ENCODE measurements at regions of chr5 and their contacts with region 1.

Region 1: DNA sequence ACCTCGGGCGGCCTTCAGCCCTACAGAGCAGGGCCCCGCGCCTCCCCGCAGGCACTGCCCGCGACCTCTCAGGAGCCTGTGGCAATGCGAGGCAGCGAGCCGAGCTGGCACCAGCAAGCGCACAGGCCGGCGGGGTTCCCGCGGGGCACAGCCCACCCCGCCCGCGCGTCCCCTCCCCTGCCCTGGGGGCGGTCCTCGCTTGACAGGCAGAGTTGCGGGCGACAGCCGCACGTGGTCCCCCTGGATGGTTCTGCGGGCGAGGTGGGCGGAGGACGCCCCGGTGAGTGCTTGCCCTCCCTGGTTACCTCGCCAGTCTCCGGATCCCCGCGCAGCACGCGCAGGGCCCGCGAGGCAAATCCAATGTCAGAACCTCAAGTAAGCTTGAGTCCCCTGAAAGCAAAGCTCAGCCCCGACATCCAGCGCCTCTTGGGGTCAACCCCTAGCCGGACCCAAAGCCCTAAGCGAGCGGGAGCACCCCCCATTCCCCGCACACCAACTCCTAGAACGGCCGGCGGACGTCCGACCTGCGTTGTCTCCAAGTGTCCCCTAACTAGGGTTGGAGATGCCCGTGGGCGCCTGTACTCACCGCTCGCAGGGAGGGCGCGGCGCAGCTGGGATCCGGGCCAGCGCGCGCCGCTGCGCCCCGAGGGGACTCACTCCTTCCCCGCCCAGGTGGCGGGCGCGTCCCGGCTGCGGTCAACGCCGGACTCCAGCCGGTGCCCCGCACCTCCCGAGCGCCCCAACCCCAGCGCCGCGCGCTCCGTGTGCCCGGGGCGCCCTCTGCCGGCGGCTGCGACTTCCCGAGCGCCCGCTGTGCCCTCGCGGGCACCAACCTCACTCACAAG is at the start of gene DRD1:
- DNase-seq: peak in 7 of 9 donors; percentile 37 to 74 (median 42)
- ATAC-seq: peak; percentile 78
- H3K4me3 ChIP-seq: peak within 1 kb of the TSS; percentile 30
- H3K4me3 Mint-ChIP-seq: peak within 1 kb of the TSS; percentile 42 to 86 (median 77)
- H3K27ac ChIP-seq: no peak within 1 kb of the TSS
- H3K27ac Mint-ChIP-seq: no peak within 1 kb of the TSS
- H3K4me1 ChIP-seq: peaks cover 0 to 5% of the 10 kb centered on the region in 2 donors
- H3K4me1 Mint-ChIP-seq: peaks cover 0 to 14% (median 7%) of the 10 kb centered on the region in 7 donors
- H3K27me3 ChIP-seq: peaks cover 3 to 12% of the 10 kb centered on the region in 2 donors
- H3K27me3 Mint-ChIP-seq: peaks cover 49 to 82% (median 51%) of the 10 kb centered on the region in 5 donors
- total RNA-seq, gene DRD1: not detected

Region 2: DNA sequence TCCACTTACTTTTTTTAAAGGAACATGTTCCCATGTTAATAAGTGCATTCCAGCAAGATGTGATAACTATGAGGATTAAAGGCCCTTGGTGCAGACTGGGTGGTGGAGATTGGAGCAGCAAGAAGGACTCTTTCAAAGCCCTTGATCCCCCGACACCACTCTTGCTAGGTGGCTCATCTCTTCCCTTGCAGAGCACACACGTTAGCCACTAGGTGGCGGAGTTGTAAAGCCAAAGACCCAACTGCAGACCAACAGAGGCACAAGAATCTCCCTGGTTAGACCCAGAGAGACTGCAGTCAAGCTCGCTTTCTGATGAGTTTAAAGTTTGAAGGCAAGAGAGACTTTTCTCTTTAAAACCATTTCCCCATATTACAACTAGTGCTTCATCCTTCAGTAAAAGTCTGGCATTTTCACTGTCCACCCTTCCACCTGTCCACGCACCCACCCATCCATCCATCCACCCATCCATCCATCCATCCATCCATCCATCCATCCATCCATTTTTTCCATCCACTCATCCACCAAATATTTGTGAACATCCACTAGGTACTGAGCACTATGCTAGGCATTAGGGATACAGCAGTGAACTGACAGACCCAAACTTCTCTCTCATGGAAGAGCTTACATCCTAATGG is 493.0 kb before region 1 on chr5:
- CTCF ChIA-PET with region 1: interaction called, 13 read pairs
- POLR2A ChIA-PET with region 1: no interaction called
- intact Hi-C with region 1: loop called (anchors 1 kb)
- DNase-seq: peak in 8 of 9 donors; percentile 6 to 60 (median 46)
- ATAC-seq: peak; percentile 68
- H3K4me3 ChIP-seq: no peak overlapping the region
- H3K4me3 Mint-ChIP-seq: no peak overlapping the region
- H3K27ac ChIP-seq: no peak overlapping the region
- H3K27ac Mint-ChIP-seq: peak overlapping the region in 1 of 9 donors; percentile 28
- H3K4me1 ChIP-seq: no peaks in the 10 kb centered on the region
- H3K4me1 Mint-ChIP-seq: no peaks in the 10 kb centered on the region
- H3K27me3 ChIP-seq: no peaks in the 10 kb centered on the region
- H3K27me3 Mint-ChIP-seq: peaks cover 0 to 23% (median 13%) of the 10 kb centered on the region in 5 donors

Region 3: DNA sequence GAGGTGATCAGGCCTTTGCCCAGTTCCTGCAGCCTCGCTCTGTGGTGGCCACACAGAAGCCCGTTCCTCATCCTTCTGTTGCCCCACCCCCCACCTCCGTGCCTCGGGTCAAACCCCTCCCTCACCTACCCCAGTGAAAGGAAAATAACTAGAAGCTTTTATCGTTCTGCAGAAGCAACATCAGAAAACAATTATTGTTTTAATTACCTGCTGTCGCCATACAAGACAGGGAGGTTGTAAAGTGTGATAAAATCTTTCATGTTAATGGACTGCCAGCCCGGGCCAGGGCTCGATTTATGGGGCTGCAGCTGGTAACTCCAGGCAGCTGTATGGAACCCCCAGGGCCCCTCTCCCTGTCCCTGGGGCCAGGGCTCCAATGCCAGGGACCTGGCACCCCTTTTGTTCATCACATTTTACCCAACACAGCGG is 1386.7 kb after region 1 on chr5:
- CTCF ChIA-PET with region 1: no interaction called
- POLR2A ChIA-PET with region 1: no interaction called
- intact Hi-C with region 1: no loop called
- DNase-seq: no peak
- ATAC-seq: no peak
- H3K4me3 ChIP-seq: no peak overlapping the region
- H3K4me3 Mint-ChIP-seq: no peak overlapping the region
- H3K27ac ChIP-seq: no peak overlapping the region
- H3K27ac Mint-ChIP-seq: no peak overlapping the region
- H3K4me1 ChIP-seq: no peaks in the 10 kb centered on the region
- H3K4me1 Mint-ChIP-seq: peaks cover 0 to 2% (median 0%) of the 10 kb centered on the region in 7 donors
- H3K27me3 ChIP-seq: no peaks in the 10 kb centered on the region
- H3K27me3 Mint-ChIP-seq: peaks cover 0 to 38% (median 29%) of the 10 kb centered on the region in 5 donors

Measured in naive thymus-derived CD4-positive, alpha-beta T cell (primary cell).